Head of caudate nucleus (tissue), 42 donors: ENCODE measurements at regions of chr2 and their contacts with region 1.

Region 1: DNA sequence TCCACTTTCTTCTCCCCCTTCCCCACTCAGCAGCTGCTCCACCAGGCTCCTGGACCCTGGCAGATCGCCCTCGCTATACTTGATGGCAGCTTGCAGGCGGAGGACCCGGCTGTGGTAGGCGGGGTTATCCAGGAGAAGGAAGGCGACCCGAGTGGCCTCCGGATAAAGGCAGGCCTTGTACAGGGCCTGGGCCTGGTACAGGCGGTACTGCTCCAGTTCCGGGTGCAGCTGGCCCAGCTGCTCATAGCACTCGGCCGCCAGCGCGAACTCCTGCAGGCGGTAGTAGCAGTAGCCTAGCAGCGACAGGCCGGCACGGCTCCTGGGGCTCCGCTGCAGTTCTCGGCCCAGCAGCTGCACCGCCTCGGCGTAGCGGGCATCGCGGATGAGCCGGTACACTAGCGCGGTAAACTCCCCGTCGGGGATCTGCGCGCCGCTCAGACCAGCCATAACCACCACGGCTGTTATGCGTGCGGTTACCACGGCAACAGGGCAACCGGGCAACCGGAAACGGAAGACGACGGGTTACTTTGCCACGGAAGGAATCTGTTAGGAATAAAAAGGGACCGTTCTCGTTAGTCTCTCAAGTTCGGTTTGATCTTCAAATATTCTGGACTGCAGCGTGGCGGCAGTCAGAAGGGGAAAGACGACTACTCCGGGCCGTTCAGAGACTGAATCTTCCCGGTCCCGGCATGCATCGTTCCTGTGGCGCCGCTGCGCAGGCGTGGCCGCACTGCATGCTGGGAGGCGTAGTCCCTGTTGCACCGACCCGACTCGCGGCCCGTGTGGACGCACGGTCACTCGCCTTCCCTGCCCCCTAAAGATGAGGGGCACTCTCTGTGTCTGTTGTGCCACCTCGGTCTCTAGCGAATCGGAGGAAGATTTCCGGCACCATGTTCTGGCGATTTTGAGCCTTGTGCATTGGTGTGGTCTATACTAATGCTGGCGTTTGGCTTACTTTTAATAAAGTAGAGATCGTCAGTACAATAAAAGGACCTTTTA is 226.0 kb downstream of the AGPS start:
- DNase-seq: peak; percentile 89 to 98 (median 95)

Region 2: DNA sequence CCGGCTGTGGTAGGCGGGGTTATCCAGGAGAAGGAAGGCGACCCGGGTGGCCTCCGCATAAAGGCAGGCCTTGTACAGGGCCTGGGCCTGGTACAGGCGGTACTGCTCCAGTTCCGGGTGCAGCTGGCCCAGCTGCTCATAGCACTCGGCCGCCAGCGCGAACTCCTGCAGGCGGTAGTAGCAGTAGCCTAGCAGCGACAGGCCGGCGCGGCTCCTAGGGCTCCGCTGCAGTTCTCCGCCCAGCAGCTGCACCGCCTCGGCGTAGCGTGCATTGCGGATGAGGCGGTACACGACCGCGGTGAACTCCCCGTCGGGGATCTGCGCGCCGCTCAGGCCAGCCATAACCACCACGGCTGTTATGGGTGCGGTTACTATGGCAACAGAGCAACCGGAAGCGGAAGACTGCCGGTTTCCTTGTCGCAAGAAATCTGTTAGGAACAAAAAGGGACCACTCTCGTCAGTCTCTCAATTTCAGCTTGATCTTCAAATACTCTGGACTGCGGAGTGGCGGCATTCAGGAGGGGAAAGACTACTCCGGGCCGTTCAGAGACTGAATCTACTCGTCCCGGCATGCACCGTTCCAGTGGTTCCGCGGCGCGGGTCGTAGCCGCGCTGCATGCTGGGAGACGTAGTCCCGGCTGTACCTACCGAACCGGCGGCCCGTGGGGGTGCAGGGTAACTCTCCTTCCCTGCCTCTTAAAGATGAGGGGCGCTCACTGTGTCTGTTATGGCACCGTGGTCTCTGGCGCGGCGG is 66.0 kb before region 1 on chr2:
- intact Hi-C with region 1: loop called (anchors 2 kb)
- DNase-seq: peak; percentile 82 to 95 (median 91)

Region 3: GRCh38 chr2:177585234-177585863 is 33.2 kb before region 1 on chr2:
- intact Hi-C with region 1: no loop called
- DNase-seq: peak in 8 of 42 donors; percentile 2 to 39 (median 16)